ENCODE measurements at regions of chr18 and their contacts with region 1.

Region 1: GRCh38 chr18:77140439-77141109 is 8.0 kb upstream of the MBP start:
- DNase-seq: no peak
- H3K4me3 Mint-ChIP-seq: no peak overlapping the region
- H3K27ac Mint-ChIP-seq: no peak overlapping the region
- H3K4me1 Mint-ChIP-seq: no peaks in the 10 kb centered on the region
- H3K27me3 Mint-ChIP-seq: peaks cover 23% of the 10 kb centered on the region
- CTCF ChIP-seq: no peak

Region 2: GRCh38 chr18:77168811-77169311 is 28.3 kb after region 1 on chr18:
- CTCF ChIA-PET with region 1: no interaction called
- intact Hi-C with region 1: loop called (anchors 2 kb)
- DNase-seq: no peak
- H3K4me3 Mint-ChIP-seq: no peak overlapping the region
- H3K27ac Mint-ChIP-seq: no peak overlapping the region
- H3K4me1 Mint-ChIP-seq: peaks cover 6% of the 10 kb centered on the region
- H3K27me3 Mint-ChIP-seq: peaks cover 73% of the 10 kb centered on the region
- CTCF ChIP-seq: no peak

Region 3: DNA sequence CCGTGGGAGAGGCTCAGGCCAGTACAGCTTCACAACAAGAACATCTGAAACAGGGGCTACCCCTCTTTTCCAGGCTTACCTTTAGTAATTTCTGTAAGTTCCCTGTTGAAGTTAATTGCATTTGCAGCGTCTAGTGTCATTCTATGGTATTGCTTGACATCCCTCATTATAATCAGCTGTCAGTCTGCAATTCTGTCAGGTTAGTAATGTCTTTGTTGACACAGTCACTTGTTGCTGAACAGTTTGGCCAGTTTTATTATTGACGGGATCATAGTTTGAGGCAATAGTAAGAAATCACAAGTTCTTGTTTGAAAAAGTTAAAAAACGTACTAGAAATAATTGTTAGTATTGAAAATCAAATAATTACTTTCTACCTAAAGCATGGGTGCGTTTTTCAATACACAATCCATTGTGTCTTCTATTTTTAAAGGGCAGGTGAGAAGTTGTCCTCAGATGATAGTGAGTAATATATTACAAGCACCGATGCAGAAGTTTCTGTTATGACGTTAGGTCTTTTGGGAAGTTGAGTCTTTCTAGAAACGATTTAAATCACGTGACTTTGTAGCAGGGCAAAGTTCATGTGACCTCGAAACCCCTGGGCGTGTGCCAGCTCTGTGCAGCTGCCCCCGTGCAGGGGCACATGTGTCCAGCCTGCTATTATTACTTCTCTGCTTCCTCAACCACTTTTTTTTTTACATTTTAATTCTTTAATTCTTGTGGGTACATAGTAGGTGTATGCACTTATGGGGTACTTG is 41.6 kb after region 1 on chr18:
- CTCF ChIA-PET with region 1: no interaction called
- intact Hi-C with region 1: loop called (anchors 2 kb)
- DNase-seq: no peak
- H3K4me3 Mint-ChIP-seq: no peak overlapping the region
- H3K27ac Mint-ChIP-seq: no peak overlapping the region
- H3K4me1 Mint-ChIP-seq: peaks cover 9% of the 10 kb centered on the region
- H3K27me3 Mint-ChIP-seq: no peaks in the 10 kb centered on the region
- CTCF ChIP-seq: no peak

Measured in Calu3 (cell line).